Astrocyte of the cerebellum (primary cell): ENCODE measurements at regions of chr12 and their contacts with region 1.

Region 1: DNA sequence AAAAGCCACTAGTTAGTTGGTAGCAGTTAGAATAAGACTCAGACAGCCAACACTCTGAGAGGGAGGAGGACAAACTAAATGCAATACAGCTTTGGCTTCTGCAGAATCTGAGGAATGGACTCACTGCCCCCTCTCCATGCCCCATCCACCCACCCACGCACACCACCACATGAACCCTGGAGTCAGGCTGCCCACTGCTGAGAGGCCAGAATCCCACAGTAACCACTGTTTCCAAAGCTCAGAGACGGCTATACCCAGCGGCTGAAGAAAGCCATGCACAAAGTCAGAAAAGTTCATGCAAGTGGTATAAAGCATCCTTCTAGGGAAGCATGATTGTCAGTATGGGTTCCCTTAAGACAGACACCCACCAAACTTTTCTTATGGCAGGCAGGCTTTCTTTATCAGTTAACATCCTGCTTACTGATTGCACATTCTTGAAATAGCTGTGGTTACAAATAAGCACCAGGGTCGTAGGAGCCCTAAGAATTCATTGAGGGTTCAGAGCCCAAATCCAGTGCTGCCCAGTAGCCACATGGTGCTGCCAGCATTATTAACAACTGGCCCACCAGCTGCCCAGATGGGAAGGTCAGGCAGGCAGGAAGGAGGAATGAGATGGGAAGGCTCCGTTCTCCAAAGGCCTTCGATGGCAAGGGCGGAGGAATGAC is 61.5 kb downstream of the NT5DC3 start:
- DNase-seq: no peak
- H3K4me3 ChIP-seq: no peak overlapping the region
- CTCF ChIP-seq: no peak

Region 2: DNA sequence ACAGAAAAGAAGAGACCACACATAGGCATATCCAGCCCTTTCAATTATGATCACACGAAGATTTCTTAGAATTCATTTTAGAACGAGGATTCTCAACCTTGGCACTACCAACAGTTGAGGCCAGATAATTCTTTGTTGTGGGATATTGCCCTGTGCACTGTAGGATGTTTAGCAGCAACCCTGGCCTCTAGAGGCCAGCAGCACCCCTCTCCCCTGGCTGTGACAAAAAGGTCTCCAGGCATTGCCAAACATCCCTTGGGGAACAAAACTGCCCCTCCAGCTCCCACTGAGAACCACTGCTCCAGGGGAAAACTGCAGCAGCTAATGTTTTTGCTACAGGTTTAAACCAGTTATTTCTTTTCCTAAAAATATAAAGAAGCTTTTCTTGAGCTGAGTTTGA is 54.3 kb after region 1 on chr12:
- in situ Hi-C with region 1: loop called (anchors 5 kb)
- DNase-seq: no peak
- H3K4me3 ChIP-seq: no peak overlapping the region
- CTCF ChIP-seq: peak; percentile 9

Region 3: DNA sequence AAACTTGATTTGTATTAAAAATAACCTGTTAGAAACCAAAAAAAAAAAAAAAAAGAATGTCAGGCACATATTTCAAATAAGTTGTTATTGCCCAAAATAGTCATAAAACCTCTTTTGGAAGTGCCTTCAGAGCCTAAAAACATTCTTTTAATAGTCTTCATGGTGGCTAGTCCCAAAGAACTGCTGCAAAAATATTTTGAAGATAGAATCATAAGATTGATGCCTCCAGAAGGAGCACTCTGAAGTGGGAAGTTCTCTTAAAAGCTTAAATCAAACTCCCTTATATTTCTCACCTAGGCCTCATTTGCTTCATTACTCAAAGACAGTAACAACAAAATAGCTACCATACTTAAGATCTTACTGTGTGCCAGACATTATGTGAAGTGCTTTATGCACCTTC is 88.7 kb after region 1 on chr12:
- in situ Hi-C with region 1: loop called (anchors 5 kb)
- DNase-seq: no peak
- H3K4me3 ChIP-seq: no peak overlapping the region
- CTCF ChIP-seq: no peak